OCI-LY7 (cell line): ENCODE measurements at regions of chr7 and their contacts with region 1.

Region 1: GRCh38 chr7:129664029-129665012 is 52.8 kb downstream of the NRF1 start:
- DNase-seq: peak; percentile 42
- H3K4me3 ChIP-seq: no peak overlapping the region
- H3K27ac ChIP-seq: no peak overlapping the region
- H3K4me1 ChIP-seq: no peaks in the 10 kb centered on the region
- CTCF ChIP-seq: peak; percentile 73

Region 2: GRCh38 chr7:129825496-129826267 is 161.4 kb after region 1 on chr7:
- CTCF ChIA-PET with region 1: no interaction called
- POLR2A ChIA-PET with region 1: no interaction called
- intact Hi-C with region 1: loop called (anchors 1 kb)
- DNase-seq: peak; percentile 78
- H3K4me3 ChIP-seq: peak overlapping the region; percentile 74
- H3K27ac ChIP-seq: no peak overlapping the region
- H3K4me1 ChIP-seq: peaks cover 4% of the 10 kb centered on the region
- CTCF ChIP-seq: peak; percentile 64